ENCODE measurements at regions of chr21 and their contacts with region 1.

Region 1: GRCh38 chr21:36113647-36114428 is 21.0 kb upstream of the CBR3 start:
- DNase-seq: no peak
- H3K4me3 ChIP-seq: no peak overlapping the region
- H3K27ac ChIP-seq: no peak overlapping the region
- H3K4me1 ChIP-seq: peaks cover 13% of the 10 kb centered on the region
- CTCF ChIP-seq: no peak

Region 2: GRCh38 chr21:35932232-35932911 is 181.5 kb before region 1 on chr21:
- CTCF ChIA-PET with region 1: no interaction called
- POLR2A ChIA-PET with region 1: no interaction called
- intact Hi-C with region 1: loop called (anchors 10 kb)
- DNase-seq: peak; percentile 91
- H3K4me3 ChIP-seq: peak overlapping the region; percentile 21
- H3K27ac ChIP-seq: peak overlapping the region; percentile 66
- H3K4me1 ChIP-seq: peaks cover 22% of the 10 kb centered on the region
- CTCF ChIP-seq: no peak

Region 3: GRCh38 chr21:36028127-36029069 is 85.4 kb before region 1 on chr21:
- CTCF ChIA-PET with region 1: interaction called, 4 read pairs
- POLR2A ChIA-PET with region 1: no interaction called
- intact Hi-C with region 1: loop called (anchors 1 kb)
- DNase-seq: peak; percentile 68
- H3K4me3 ChIP-seq: no peak overlapping the region
- H3K27ac ChIP-seq: no peak overlapping the region
- H3K4me1 ChIP-seq: peaks cover 5% of the 10 kb centered on the region
- CTCF ChIP-seq: peak; percentile 97

Measured in OCI-LY7 (cell line).